Endothelial cell of umbilical vein (primary cell): ENCODE measurements at regions of chr12 and their contacts with region 1.

Region 1: DNA sequence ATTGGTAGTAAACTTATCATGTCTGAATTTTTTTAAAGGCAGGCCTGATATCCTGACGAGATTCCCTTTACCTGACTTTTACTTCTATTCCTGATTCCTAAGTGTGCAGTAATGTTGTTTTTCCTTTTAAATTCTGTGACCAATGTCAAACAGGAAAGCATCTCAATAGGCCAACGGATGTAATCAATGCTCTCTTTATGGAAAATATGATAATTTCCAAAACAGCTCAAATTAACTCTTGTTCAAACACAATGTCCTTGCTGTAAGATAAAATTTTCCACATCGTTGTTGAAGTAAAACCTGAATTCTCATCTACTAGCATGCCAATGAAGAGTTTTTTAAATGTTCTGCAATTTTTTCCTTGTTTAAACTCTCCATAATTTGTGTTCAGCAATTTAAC is 8.0 kb upstream of the TAS2R31 start:
- DNase-seq: no peak
- H3K4me3 ChIP-seq: no peak overlapping the region
- H3K27ac ChIP-seq: no peak overlapping the region
- H3K4me1 ChIP-seq: no peaks in the 10 kb centered on the region
- H3K27me3 ChIP-seq: no peaks in the 10 kb centered on the region
- CTCF ChIP-seq: no peak
- POLR2A ChIP-seq: no peak

Region 2: DNA sequence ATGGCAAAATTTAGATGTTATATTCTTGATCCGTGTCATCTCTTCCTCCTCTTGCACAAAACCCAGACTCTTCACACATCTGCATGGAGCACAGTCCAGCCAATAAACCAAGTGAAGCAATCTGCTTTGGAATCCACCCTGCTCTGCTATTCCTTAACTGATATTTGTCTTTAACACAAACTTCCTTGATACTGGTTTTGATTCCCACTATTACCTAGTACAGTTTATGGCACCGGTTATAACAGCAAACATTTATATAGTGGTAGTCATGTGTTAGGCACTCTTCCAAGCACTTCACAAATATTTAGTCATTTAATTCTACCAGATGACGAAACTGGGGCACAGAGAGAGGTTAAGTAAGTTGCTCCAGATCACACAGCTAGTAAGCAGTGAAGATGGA is 377.8 kb before region 1 on chr12:
- CTCF ChIA-PET with region 1: no interaction called
- POLR2A ChIA-PET with region 1: no interaction called
- dilution Hi-C with region 1: no loop called
- intact Hi-C with region 1: no loop called
- DNase-seq: no peak
- H3K4me3 ChIP-seq: no peak overlapping the region
- H3K27ac ChIP-seq: no peak overlapping the region
- H3K4me1 ChIP-seq: no peaks in the 10 kb centered on the region
- H3K27me3 ChIP-seq: no peaks in the 10 kb centered on the region
- CTCF ChIP-seq: no peak
- POLR2A ChIP-seq: no peak

Region 3: DNA sequence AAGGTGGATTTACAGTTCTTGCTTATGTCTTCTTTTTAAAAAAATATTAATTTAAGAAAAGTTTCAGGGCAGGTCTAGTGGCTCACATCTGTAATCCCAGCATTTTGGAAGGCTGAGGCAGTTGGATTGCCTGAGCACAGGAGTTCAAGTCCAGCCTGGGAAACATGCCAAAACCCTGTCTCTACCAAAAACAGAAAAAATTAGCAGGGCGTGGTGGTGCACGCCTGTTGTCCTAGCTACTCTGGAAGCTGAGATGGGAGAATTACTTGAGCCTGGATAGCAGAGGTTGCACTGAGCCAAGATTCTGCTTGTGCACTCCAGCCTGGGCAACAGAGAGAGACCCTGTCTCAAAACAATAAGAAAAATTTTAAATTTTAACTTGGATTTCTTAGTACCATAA is 28.3 kb after region 1 on chr12:
- CTCF ChIA-PET with region 1: no interaction called
- POLR2A ChIA-PET with region 1: no interaction called
- dilution Hi-C with region 1: no loop called
- intact Hi-C with region 1: loop called (anchors 1 kb)
- DNase-seq: no peak
- H3K4me3 ChIP-seq: no peak overlapping the region
- H3K27ac ChIP-seq: no peak overlapping the region
- H3K4me1 ChIP-seq: no peaks in the 10 kb centered on the region
- H3K27me3 ChIP-seq: no peaks in the 10 kb centered on the region
- CTCF ChIP-seq: no peak
- POLR2A ChIP-seq: no peak

Region 4: GRCh38 chr12:11085419-11085818 is 46.2 kb after region 1 on chr12:
- CTCF ChIA-PET with region 1: no interaction called
- POLR2A ChIA-PET with region 1: no interaction called
- dilution Hi-C with region 1: no loop called
- intact Hi-C with region 1: loop called (anchors 5 kb)
- DNase-seq: peak; percentile 23
- H3K4me3 ChIP-seq: no peak overlapping the region
- H3K27ac ChIP-seq: peak overlapping the region; percentile 23
- H3K4me1 ChIP-seq: no peaks in the 10 kb centered on the region
- H3K27me3 ChIP-seq: no peaks in the 10 kb centered on the region
- CTCF ChIP-seq: no peak
- POLR2A ChIP-seq: no peak

Region 5: DNA sequence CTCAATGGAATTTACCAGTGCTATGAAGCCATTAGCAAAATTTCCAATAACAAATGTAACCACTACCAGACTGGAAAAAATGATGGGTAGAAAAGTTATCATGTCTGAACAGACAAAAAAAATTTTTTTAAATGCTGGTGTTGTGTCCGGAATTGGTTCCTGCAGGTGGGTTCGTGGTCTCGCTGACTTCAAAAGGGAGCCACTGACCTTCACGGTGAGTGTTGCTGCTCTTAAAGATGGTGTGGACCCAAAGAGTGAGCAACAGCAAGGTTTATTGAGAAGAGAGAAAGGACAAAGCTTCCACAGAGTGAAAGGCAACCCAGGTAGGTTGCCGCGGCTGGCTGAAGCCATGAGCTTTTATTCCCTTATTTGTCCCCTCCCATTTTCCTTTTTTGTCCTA is 53.0 kb after region 1 on chr12 and contains the start of gene TAS2R43:
- CTCF ChIA-PET with region 1: no interaction called
- POLR2A ChIA-PET with region 1: no interaction called
- dilution Hi-C with region 1: no loop called
- intact Hi-C with region 1: loop called (anchors 2 kb)
- DNase-seq: no peak
- H3K4me3 ChIP-seq: no peak within 1 kb of the TSS
- H3K27ac ChIP-seq: no peak within 1 kb of the TSS
- H3K4me1 ChIP-seq: no peaks in the 10 kb centered on the region
- H3K27me3 ChIP-seq: no peaks in the 10 kb centered on the region
- CTCF ChIP-seq: no peak
- POLR2A ChIP-seq: no peak
- total RNA-seq, gene TAS2R43: 0.88 and 1.8 TPM in 2 replicates